ENCODE measurements at regions of chr19 and their contacts with region 1.

Region 1: DNA sequence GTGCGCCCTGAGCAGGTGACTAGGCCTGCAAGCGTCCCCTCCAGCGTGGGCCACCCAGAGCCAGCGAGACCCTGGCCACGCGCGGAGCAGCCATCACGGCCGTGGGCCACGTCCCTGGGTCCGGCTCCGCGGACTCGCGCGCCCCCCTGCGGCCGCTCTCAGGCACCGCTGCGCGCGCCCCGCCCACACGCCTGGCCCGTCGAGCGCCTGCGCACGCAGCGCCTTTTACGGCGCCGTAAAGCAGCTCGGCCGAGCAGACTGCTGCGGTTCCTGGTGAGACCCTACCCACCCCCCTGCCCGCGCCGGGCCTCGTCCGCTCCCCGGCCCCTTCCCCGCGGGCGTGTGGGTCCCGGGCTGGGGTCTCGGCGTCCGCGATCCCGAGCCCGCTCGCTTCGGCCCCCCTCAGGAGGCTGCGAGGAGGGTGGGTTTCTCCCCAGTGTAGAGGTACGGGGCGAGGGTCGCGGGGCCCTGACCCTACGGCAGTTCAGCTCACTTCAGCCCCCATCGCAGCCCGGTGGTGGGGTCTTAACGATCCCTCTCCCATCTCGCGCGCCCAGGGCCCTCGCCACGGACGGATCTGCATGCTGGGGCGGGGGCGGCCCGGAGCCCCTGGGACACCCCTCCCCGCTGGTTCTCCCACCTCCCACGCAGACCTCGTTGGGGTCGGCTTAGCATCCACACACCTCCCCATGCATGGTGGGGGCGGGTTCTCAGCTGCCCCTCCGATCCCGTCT is at the start of gene TRAPPC5:
- DNase-seq: peak; percentile 94
- ATAC-seq: peak; percentile 94
- total RNA-seq, gene TRAPPC5: 116 TPM

Region 2: GRCh38 chr19:7565332-7565731 is 115.4 kb before region 1 on chr19:
- intact Hi-C with region 1: loop called (anchors 5 kb)
- DNase-seq: no peak
- ATAC-seq: no peak